Gastrocnemius medialis (tissue), 4 donors: ENCODE measurements at regions of chr4 and their contacts with region 1.

Region 1: DNA sequence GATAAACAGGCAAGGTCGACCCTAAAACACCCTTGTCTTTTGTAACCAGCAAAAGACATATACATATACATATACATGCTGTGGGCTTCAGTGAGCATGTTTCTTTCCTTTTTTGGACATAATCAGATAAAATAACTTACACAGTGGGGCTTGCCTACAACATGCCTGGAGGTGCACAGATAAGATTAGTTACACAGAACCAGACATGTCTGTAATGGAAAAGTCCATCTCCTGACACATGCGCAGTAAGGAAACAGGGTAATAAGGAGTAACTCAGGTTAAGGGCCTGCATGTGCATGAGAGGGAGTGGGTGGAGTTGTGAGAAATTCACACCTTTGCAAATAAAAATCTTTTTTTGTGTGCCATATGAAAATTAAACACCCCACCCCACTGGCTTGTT is 3.4 kb downstream of the UGT2A1 start:
- DNase-seq: no peak
- ATAC-seq: no peak
- H3K4me3 ChIP-seq: no peak overlapping the region
- H3K27ac ChIP-seq: no peak overlapping the region
- H3K4me1 ChIP-seq: no peaks in the 10 kb centered on the region
- H3K27me3 ChIP-seq: no peaks in the 10 kb centered on the region
- CTCF ChIP-seq: no peak
- POLR2A ChIP-seq: no peak

Region 2: GRCh38 chr4:69760455-69760854 is 110.8 kb after region 1 on chr4 and contains the start of gene SULT1B1:
- in situ Hi-C with region 1: loop called in 1 of 4 experiments (anchors 25 kb)
- intact Hi-C with region 1: no loop called
- DNase-seq: no peak
- ATAC-seq: no peak
- H3K4me3 ChIP-seq: no peak within 1 kb of the TSS
- H3K27ac ChIP-seq: no peak within 1 kb of the TSS
- H3K4me1 ChIP-seq: no peaks in the 10 kb centered on the region
- H3K27me3 ChIP-seq: no peaks in the 10 kb centered on the region
- CTCF ChIP-seq: no peak
- POLR2A ChIP-seq: no peak
- total RNA-seq, gene SULT1B1: 0.36 to 0.70 (median 0.55) TPM in 3 of 4 donors, not detected in the other